ENCODE measurements at regions of chr1 and their contacts with region 1.

Region 1: DNA sequence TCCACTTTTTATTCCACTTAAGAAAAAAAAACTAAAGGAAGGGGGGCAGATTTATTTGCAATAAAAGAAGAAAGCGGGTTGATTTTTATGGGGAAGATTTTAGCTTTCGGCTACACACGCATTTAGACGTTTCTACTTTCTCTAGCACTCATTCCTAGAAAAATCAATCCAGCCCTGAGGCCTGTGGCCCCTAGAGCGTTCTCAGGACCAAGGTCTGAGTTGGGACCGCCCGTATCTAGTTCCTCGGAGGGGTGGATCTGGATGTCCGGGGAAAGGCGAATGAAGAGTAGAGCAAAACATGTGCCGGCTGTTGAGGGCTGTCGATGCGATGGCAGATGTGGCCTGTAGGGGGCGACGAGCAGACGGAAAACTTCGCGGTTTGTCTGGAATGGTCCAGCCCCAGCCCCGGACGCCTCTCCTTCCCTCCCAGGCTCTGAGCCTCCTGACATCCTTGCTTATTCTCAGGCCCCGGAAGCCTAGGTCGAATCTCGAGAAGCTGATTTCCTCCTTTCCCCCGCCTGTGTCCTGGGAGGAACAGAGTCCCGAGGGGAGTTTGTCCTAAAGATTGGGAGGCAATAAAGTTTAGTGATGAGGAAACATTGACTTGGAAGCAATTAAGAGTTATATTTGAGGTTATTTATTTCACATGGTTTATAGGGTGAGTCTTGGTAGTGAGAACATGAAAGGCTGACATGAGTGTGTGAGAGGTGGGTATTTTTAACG is 5.2 kb downstream of the FOXD3 start:
- DNase-seq: peak; percentile 19 to 82 (median 58)
- ATAC-seq: peak; percentile 53 to 94 (median 85)
- H3K4me3 ChIP-seq: no peak overlapping the region
- H3K27ac ChIP-seq: no peak overlapping the region
- H3K4me1 ChIP-seq: no peaks in the 10 kb centered on the region
- H3K27me3 ChIP-seq: peaks cover 9 to 68% (median 32%) of the 10 kb centered on the region in 4 donors
- CTCF ChIP-seq: peak; percentile 40 to 64 (median 55)

Region 2: GRCh38 chr1:63124666-63125191 is 202.8 kb before region 1 on chr1:
- intact Hi-C with region 1: no loop called
- DNase-seq: no peak
- ATAC-seq: peak in 3 of 4 donors; percentile 30 to 63 (median 40)
- H3K4me3 ChIP-seq: no peak overlapping the region
- H3K27ac ChIP-seq: peak overlapping the region in 1 of 4 donors; percentile 39
- H3K4me1 ChIP-seq: no peaks in the 10 kb centered on the region
- H3K27me3 ChIP-seq: no peaks in the 10 kb centered on the region
- CTCF ChIP-seq: no peak

Region 3: GRCh38 chr1:63435161-63435560 is 107.6 kb after region 1 on chr1:
- intact Hi-C with region 1: loop called in 1 of 3 experiments (anchors 10 kb)
- DNase-seq: no peak
- ATAC-seq: no peak
- H3K4me3 ChIP-seq: no peak overlapping the region
- H3K27ac ChIP-seq: no peak overlapping the region
- H3K4me1 ChIP-seq: no peaks in the 10 kb centered on the region
- H3K27me3 ChIP-seq: no peaks in the 10 kb centered on the region
- CTCF ChIP-seq: no peak